Left cardiac atrium (tissue), 4 donors: ENCODE measurements at regions of chr2 and their contacts with region 1.

Region 1: GRCh38 chr2:134258684-134259388 is 5.0 kb downstream of the MGAT5 start:
- DNase-seq: peak; percentile 56
- ATAC-seq: peak; percentile 47 to 68

Region 2: DNA sequence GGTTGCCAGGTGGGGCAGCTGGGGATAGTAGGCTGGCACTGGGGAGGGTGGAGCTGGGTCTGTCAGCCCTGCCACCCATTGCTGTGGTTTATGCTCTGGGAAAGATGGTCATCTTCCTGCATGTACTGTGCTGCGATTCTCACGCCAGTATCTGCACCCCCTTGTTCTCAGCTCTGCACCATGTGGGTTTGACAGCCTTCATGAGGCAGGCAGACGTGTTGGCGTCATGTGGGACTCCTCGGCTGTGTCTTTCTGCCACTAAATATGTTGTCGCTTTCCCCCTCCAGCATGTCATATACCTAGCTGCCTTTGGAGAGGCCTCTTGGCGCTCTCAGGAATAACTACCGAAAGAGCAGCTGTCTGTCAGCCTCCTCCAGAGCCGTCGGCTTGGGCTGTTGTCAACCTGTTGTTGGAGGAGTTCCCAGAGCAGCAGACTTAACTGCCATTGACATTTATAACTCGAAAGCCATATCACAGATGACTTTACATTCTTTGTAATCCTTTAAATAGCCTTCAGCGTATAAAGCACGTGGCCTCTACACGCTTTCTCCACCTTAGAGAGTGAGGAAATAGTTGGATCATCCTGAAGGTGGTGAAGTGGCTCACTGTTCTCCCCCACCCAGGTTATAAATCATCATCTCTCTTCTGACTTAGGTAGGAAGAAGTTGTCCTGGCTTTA is 85.4 kb before region 1 on chr2:
- intact Hi-C with region 1: loop called in 1 of 2 experiments (anchors 5 kb)
- DNase-seq: peak; percentile 51
- ATAC-seq: peak; percentile 64 to 77

Region 3: GRCh38 chr2:134359367-134360081 is 100.7 kb after region 1 on chr2:
- intact Hi-C with region 1: loop called in 1 of 2 experiments (anchors 5 kb)
- DNase-seq: no peak
- ATAC-seq: peak in 1 of 2 donors; percentile 26

Region 4: DNA sequence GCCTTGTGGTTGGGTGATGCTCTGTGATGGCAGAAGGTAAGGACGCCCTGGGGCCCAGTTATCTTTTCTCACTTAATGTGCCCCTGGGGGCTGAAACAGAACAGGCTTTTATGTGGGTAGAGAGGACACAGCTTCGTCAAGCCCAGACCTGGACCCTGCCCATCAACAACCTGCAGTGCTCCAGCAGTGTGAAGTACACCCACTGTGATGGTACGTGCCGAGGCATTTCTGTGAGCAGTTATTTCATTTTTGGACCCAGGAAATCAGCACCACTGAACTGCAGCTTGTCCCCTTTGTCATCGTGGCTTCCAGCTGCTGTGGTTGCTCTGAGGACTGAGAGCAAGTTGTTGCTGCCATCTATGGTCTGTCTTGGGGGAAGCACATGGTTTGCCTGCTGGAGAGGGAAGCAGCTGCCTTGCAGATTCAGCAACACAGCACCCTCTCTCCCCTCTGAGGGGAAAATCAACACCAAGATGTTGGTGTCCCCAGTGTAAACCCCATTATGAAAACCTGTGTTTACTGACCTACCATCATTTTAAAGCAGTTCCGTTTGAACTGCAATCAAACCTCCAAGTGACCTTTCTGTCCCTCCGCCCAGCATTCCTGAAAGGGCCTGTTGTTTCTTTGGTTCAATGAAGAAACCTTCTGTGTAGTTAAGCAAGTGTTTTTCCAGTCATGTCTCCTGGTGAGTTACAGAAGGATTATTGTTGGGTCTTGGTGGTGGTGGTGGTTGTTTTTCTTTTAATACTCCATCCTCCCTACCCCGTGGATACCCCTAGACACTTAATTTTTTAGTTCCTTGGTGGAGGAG is 153.2 kb after region 1 on chr2:
- intact Hi-C with region 1: loop called in 1 of 2 experiments (anchors 5 kb)
- DNase-seq: peak; percentile 64
- ATAC-seq: peak; percentile 93 to 96